Mammary epithelial cell (primary cell): ENCODE measurements at regions of chr6 and their contacts with region 1.

Region 1: DNA sequence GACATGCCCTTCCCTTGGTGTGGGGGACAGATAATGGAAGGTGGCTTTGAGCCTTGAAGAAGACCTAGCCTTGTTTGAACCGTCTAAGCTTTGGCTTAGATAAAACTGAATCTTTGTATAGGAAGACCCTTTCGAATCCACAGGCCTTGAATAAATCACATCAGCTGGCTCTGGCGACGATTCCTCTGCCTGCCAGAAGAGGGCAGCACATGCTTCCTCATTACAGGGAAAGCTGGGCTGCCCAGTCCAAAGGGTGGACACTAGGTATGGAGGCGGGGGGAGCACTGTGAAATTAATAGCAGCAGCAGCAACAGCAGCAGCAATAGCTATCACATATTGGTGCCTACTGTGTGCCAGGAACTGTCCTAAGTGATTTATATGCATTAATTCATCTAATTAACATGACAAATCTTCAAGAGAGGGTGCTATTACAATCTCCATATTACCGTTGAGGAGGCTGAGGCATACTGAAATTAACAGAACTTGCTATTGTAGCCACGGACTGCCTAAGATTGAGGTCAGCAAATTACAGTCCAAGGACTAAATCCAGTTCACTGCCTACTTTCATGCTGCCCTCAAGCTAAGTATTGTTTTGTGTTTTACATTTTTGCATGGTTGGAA is 85.1 kb downstream of the CLIC5 start:
- DNase-seq: peak; percentile 32
- H3K4me3 ChIP-seq: no peak overlapping the region
- H3K27ac ChIP-seq: no peak overlapping the region
- H3K4me1 ChIP-seq: no peaks in the 10 kb centered on the region
- H3K27me3 ChIP-seq: no peaks in the 10 kb centered on the region
- CTCF ChIP-seq: peak; percentile 97 to 98

Region 2: GRCh38 chr6:46042355-46042999 is 111.9 kb after region 1 on chr6:
- CTCF ChIA-PET with region 1: no interaction called
- dilution Hi-C with region 1: no loop called
- in situ Hi-C with region 1: no loop called
- intact Hi-C with region 1: loop called (anchors 2 kb)
- DNase-seq: peak; percentile 48
- H3K4me3 ChIP-seq: no peak overlapping the region
- H3K27ac ChIP-seq: no peak overlapping the region
- H3K4me1 ChIP-seq: no peaks in the 10 kb centered on the region
- H3K27me3 ChIP-seq: peaks cover 2% of the 10 kb centered on the region
- CTCF ChIP-seq: peak; percentile 73 to 75

Region 3: DNA sequence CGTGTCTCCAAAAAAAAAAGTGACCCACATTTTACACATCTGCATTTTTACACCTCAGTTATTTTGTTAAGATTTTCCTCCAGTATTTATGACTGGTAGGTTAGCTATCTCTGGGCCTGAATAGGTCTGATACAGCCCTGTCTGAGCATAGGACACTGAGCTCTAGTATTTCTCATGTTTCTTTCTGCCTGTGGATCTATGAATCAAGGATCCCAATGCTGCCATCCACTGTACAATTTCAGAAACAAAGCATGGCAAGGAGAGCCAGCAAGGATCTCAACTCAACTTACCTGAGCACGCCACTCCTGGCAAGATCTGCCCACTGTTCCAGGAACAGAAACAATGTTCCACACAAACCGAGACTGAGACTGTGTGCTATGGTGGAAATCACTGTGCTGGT is 276.6 kb after region 1 on chr6:
- CTCF ChIA-PET with region 1: no interaction called
- dilution Hi-C with region 1: no loop called
- in situ Hi-C with region 1: no loop called
- intact Hi-C with region 1: loop called (anchors 5 kb)
- DNase-seq: no peak
- H3K4me3 ChIP-seq: no peak overlapping the region
- H3K27ac ChIP-seq: no peak overlapping the region
- H3K4me1 ChIP-seq: no peaks in the 10 kb centered on the region
- H3K27me3 ChIP-seq: peaks cover 3% of the 10 kb centered on the region
- CTCF ChIP-seq: peak in 1 of 2 donors; percentile 19

Region 4: GRCh38 chr6:46221222-46221793 is 290.8 kb after region 1 on chr6:
- CTCF ChIA-PET with region 1: no interaction called
- dilution Hi-C with region 1: no loop called
- in situ Hi-C with region 1: no loop called
- intact Hi-C with region 1: loop called (anchors 1 kb)
- DNase-seq: peak; percentile 21
- H3K4me3 ChIP-seq: no peak overlapping the region
- H3K27ac ChIP-seq: no peak overlapping the region
- H3K4me1 ChIP-seq: no peaks in the 10 kb centered on the region
- H3K27me3 ChIP-seq: peaks cover 2% of the 10 kb centered on the region
- CTCF ChIP-seq: peak; percentile 83 to 88

Region 5: GRCh38 chr6:46410334-46410953 is 479.9 kb after region 1 on chr6:
- CTCF ChIA-PET with region 1: no interaction called
- dilution Hi-C with region 1: no loop called
- in situ Hi-C with region 1: no loop called
- intact Hi-C with region 1: loop called (anchors 1 kb)
- DNase-seq: peak; percentile 27
- H3K4me3 ChIP-seq: no peak overlapping the region
- H3K27ac ChIP-seq: no peak overlapping the region
- H3K4me1 ChIP-seq: no peaks in the 10 kb centered on the region
- H3K27me3 ChIP-seq: peaks cover 5% of the 10 kb centered on the region
- CTCF ChIP-seq: peak; percentile 40 to 69